ENCODE measurements at regions of chr11 and their contacts with region 1.

Region 1: GRCh38 chr11:118791111-118791965 is at the start of gene DDX6:
- DNase-seq: peak; percentile 95
- H3K4me3 Mint-ChIP-seq: peak within 1 kb of the TSS; percentile 99
- H3K27ac Mint-ChIP-seq: peak within 1 kb of the TSS; percentile 98
- H3K4me1 Mint-ChIP-seq: peaks cover 20% of the 10 kb centered on the region
- H3K27me3 Mint-ChIP-seq: no peaks in the 10 kb centered on the region
- total RNA-seq, gene DDX6: 274 to 279 TPM

Region 2: DNA sequence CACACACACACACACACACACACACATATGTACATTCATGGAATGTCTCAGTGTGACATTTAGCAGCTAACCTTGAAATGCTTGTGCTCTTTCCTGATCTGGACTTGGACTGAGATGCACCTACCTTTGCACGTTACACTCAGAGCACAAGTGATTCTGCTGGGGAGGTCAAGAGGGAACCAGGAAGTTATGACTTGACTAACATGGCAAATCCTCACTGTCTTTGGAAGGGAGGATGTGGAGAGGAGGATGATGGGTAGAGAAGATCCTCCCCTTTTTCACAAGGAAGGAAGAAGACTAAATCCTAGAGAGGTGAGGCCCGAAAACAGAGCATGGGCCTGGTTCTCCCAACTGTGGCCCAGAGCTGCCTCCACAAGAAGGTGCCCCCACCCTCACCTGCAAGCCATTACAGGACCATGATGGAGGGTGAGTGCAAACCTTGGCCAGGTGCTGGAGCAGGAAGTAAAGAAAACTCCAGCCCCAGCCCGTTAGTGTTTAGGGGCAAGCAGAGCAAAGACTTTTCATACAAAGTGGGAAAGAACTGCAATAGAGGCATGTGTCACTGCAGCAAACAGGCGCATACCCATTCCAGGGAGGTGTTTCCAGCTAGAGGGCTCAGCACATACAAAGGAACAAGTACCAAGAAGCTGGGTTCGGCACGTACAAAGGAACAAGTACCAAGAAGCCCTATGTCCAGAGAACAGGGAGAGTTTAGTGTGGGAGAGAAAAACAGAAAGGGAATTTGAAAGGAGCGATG is 665.1 kb before region 1 on chr11:
- CTCF ChIA-PET with region 1: no interaction called
- intact Hi-C with region 1: no loop called
- DNase-seq: peak; percentile 20
- H3K4me3 Mint-ChIP-seq: no peak overlapping the region
- H3K27ac Mint-ChIP-seq: no peak overlapping the region
- H3K4me1 Mint-ChIP-seq: no peaks in the 10 kb centered on the region
- H3K27me3 Mint-ChIP-seq: peaks cover 6% of the 10 kb centered on the region

Region 3: GRCh38 chr11:118359295-118359958 is 431.9 kb before region 1 on chr11 and contains the start of gene UBE4A:
- CTCF ChIA-PET with region 1: no interaction called
- intact Hi-C with region 1: no loop called
- DNase-seq: peak; percentile 100
- H3K4me3 Mint-ChIP-seq: peak within 1 kb of the TSS; percentile 99
- H3K27ac Mint-ChIP-seq: peak within 1 kb of the TSS; percentile 91
- H3K4me1 Mint-ChIP-seq: peaks cover 52% of the 10 kb centered on the region
- H3K27me3 Mint-ChIP-seq: no peaks in the 10 kb centered on the region
- total RNA-seq, gene UBE4A: 35.3 to 35.7 TPM

Region 4: DNA sequence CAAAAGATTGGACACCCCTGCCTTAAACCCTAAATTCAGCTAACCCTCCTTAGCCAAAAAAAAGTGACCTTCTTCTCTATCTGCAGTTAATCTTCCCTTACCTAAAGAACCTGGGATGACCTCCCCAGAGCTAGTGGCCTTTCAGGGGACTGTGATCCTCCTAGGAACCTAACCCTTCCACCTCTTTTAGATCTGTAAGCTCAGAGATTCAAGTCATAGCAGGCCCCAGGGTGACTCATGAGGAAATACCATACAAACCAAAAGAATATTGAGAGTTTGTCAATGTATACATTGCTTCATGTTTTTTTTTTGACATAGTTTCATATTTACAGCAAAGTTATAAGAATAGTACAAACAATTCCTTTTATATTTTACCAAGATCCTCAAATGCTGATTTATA is 54.0 kb after region 1 on chr11:
- CTCF ChIA-PET with region 1: interaction called, 7 read pairs
- intact Hi-C with region 1: loop called (anchors 1 kb)
- DNase-seq: peak; percentile 69
- H3K4me3 Mint-ChIP-seq: no peak overlapping the region
- H3K27ac Mint-ChIP-seq: peak overlapping the region; percentile 63
- H3K4me1 Mint-ChIP-seq: peaks cover 38% of the 10 kb centered on the region
- H3K27me3 Mint-ChIP-seq: no peaks in the 10 kb centered on the region

Region 5: GRCh38 chr11:118878163-118878563 is 86.8 kb after region 1 on chr11:
- CTCF ChIA-PET with region 1: interaction called, 76 read pairs
- intact Hi-C with region 1: loop called (anchors 1 kb)
- DNase-seq: peak; percentile 63
- H3K4me3 Mint-ChIP-seq: peak overlapping the region; percentile 31
- H3K27ac Mint-ChIP-seq: peak overlapping the region; percentile 99
- H3K4me1 Mint-ChIP-seq: peaks cover 96% of the 10 kb centered on the region
- H3K27me3 Mint-ChIP-seq: no peaks in the 10 kb centered on the region

Region 6: GRCh38 chr11:118895142-118896039 is 104.1 kb after region 1 on chr11:
- CTCF ChIA-PET with region 1: interaction called, 32 read pairs
- intact Hi-C with region 1: loop called (anchors 1 kb)
- DNase-seq: peak; percentile 95
- H3K4me3 Mint-ChIP-seq: peak overlapping the region; percentile 72
- H3K27ac Mint-ChIP-seq: peak overlapping the region; percentile 97
- H3K4me1 Mint-ChIP-seq: peaks cover 78% of the 10 kb centered on the region
- H3K27me3 Mint-ChIP-seq: no peaks in the 10 kb centered on the region

Region 7: GRCh38 chr11:118928108-118928870 is 137.0 kb after region 1 on chr11:
- CTCF ChIA-PET with region 1: interaction called, 4 read pairs
- intact Hi-C with region 1: loop called (anchors 1 kb)
- DNase-seq: peak; percentile 96
- H3K4me3 Mint-ChIP-seq: peak overlapping the region; percentile 96
- H3K27ac Mint-ChIP-seq: peak overlapping the region; percentile 95
- H3K4me1 Mint-ChIP-seq: peaks cover 37% of the 10 kb centered on the region
- H3K27me3 Mint-ChIP-seq: no peaks in the 10 kb centered on the region

Region 8: DNA sequence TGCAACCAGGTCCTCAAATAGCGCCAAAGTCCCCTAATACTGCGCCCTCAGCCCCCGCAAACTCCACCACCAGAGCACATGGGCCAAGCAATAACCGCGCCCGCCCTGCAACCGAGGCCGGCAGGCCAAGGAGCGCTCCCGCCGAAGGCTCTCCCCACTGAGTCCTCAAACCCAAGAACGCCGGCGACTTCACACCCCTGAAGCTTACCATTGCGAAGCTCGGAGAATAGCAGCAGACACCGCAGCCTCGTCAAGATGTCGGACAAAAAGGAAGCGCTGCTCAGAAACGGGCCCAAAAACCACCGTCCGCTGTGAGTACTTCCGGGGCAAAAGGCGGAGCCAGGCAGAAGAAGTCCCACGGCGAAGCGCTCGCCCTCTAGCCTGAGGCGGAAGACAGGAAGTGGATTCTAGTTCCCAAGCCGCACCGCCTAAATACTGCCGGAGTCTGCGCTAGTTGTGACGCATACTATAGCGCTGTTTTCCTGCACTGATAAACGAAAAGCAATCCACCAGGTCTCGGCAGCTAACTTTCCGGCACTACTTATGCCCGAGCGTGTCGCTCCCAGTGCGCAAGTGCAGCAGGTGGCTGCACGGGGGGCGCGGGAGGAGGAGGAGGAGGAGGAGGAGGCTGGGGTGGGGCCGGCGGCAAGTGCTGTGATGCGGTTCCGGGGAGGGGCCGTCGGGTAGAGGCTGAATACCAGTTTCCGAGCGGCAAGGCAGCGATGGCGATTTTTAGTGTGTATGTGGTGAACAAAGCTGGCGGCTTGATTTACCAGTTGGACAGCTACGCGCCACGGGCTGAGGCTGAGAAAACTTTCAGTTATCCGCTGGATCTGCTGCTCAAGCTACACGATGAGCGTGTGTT is 227.0 kb after region 1 on chr11 and contains the starts of genes RPS25 and TRAPPC4:
- CTCF ChIA-PET with region 1: no interaction called
- intact Hi-C with region 1: loop called (anchors 1 kb)
- DNase-seq: peak; percentile 98
- H3K4me3 Mint-ChIP-seq: peak within 1 kb of the TSS; percentile 98
- H3K27ac Mint-ChIP-seq: peak within 1 kb of the TSS; percentile 99
- H3K4me1 Mint-ChIP-seq: peaks cover 59% of the 10 kb centered on the region
- H3K27me3 Mint-ChIP-seq: no peaks in the 10 kb centered on the region
- total RNA-seq, gene RPS25: 2,183 to 2,206 TPM
- total RNA-seq, gene TRAPPC4: 66.4 to 69.9 TPM

Region 9: GRCh38 chr11:119095066-119095880 is 303.9 kb after region 1 on chr11:
- CTCF ChIA-PET with region 1: no interaction called
- intact Hi-C with region 1: loop called (anchors 2 kb)
- DNase-seq: peak; percentile 100
- H3K4me3 Mint-ChIP-seq: peak overlapping the region; percentile 92
- H3K27ac Mint-ChIP-seq: peak overlapping the region; percentile 96
- H3K4me1 Mint-ChIP-seq: peaks cover 39% of the 10 kb centered on the region
- H3K27me3 Mint-ChIP-seq: no peaks in the 10 kb centered on the region

Measured in activated naive CD4-positive, alpha-beta T cell treated with anti-CD3 and anti-CD28 coated beads for 36 hours (primary cell).